Left ventricle myocardium inferior (tissue), 1 donor: ENCODE measurements at regions of chr3 and their contacts with region 1.

Region 1: DNA sequence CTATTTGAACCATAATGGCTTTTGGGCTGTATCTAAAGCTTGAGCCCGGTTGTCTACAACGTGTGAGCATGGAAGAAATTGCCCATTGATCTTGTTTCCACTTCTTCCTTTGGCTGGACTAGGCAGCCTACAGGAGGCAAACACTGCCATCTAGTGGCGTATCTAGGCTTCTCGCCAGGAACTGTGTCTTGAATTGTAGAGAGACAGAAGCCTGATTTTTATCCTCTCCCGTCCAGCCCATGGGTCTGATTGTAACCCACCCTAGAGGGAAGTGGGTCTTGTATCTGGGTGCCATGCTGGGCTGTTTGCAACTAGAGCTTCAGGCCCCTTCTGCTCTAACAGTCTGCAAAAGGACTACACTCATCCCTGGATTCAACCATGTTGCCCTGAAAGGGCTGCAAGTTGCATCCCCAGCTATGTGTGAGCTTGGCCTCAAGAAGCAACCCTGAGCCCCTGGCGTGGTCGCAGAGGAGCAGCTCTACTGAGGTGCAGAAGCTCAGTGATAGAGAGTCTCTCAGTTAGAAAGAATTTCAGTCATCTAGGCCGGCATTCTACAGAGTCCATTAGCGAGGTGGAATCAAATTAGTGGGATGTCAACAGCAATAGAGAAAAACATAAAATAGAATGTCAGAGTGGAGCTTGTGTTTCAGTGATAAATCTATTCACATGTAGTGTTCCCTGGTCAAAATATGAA is 170.2 kb upstream of the UMPS start:
- DNase-seq: peak; percentile 54
- H3K4me3 ChIP-seq: no peak overlapping the region
- H3K27ac ChIP-seq: peak overlapping the region; percentile 64
- H3K4me1 ChIP-seq: peaks cover 34% of the 10 kb centered on the region
- H3K27me3 ChIP-seq: no peaks in the 10 kb centered on the region
- CTCF ChIP-seq: peak; percentile 91

Region 2: GRCh38 chr3:124351430-124352148 is 208.4 kb before region 1 on chr3:
- intact Hi-C with region 1: loop called (anchors 10 kb)
- DNase-seq: no peak
- H3K4me3 ChIP-seq: no peak overlapping the region
- H3K27ac ChIP-seq: no peak overlapping the region
- H3K4me1 ChIP-seq: no peaks in the 10 kb centered on the region
- H3K27me3 ChIP-seq: no peaks in the 10 kb centered on the region
- CTCF ChIP-seq: peak; percentile 71

Region 3: DNA sequence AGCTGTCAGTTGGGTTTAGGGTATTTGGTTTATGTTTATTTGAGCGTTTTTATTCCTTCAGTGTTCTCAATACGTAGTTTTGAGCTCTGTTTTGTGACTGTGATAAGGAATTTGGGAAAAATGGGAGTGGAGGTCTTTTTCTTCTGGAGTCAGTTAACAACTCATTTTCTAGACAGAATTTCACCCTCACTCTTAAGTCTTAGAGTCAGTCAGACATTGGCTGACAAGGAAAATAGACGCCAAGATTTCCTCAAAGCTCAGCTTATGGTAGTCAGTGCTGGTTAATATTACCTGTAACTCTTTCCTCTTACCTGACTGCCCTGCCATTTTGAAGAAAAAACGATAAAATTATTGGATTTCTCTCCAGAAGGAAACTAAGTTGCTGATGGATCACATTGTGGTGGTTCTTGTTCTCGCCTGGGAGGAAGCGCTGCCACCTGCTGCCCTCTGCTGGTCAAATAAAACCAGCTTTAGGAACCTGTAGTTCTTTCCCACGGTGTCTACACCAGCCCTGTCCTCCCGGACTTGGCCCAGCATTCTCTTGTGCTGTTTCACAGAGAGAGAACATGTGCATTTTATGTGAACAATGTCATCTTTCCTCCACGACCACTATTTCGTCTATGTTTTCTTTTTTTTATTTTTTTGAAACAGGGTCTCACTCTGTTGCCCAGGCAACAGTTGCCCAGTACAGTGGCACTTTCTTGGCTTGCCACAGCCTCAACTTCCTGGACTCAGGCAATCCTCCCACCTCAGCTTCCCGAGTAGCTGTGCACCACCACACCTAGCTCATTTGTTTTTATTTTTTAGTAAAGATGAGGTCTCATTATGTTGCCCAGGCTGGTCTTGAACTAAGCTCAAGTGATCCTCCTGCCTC is 128.8 kb after region 1 on chr3:
- intact Hi-C with region 1: loop called (anchors 2 kb)
- DNase-seq: peak; percentile 66
- H3K4me3 ChIP-seq: no peak overlapping the region
- H3K27ac ChIP-seq: no peak overlapping the region
- H3K4me1 ChIP-seq: peaks cover 38% of the 10 kb centered on the region
- H3K27me3 ChIP-seq: no peaks in the 10 kb centered on the region
- CTCF ChIP-seq: peak; percentile 93